ENCODE measurements at regions of chr20 and their contacts with region 1.

Region 1: DNA sequence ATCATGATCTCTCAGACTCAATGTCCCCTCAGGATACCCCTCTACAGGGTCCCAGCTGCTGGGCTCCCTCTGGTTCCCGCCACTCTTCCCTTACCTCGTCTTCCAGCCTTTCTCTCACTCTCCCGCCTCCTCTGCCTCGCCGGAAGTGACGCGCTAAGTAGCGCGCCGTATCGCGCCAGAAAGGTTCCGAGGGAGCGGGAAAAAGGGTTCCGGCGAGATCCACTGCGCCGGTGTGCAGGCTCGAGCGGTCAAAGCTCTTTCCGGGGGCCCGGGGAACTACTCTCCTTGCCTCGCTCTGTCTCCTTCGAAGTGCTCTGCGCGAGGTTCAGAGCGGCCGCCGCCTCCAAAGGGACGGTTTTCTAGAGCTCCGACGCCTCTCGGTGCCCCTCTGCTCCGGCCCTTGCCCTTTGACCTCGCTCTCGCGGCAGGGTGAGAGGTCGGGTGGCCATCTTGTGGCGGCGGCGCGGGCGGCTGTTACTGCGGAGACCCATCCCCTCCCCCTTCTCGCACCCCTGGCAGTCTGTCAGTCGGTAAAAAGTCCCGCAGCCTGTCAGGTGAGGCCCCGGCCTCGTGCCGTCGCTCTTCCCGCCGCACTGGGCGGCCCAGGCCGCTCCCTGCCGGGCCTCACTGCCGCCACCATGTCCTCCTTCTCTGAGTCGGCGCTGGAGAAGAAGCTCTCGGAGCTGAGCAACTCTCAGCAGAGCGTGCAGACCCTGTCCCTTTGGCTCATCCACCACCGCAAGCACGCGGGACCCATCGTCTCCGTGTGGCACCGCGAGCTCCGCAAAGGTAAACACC is at the starts of genes RPRD1B and TTI1:
- DNase-seq: peak; percentile 83 to 97 (median 86)
- ATAC-seq: peak; percentile 82
- H3K4me3 ChIP-seq: peak within 1 kb of the TSS; percentile 96
- H3K27ac ChIP-seq: peak within 1 kb of the TSS; percentile 98
- H3K4me1 ChIP-seq: peaks cover 22 to 40% of the 10 kb centered on the region in 2 experiments; a peak in 4 of 5 replicates
- H3K27me3 ChIP-seq: no peaks in the 10 kb centered on the region
- CTCF ChIP-seq: 0 out of 6 replicates have a peak, but pooled peaks of 1 of the 3 experiments have one; percentile 5
- EP300 ChIP-seq: no peak
- POLR2A ChIP-seq: peak; percentile 89
- RAD21 ChIP-seq: no peak
- polyA plus RNA-seq, gene RPRD1B: 5.5 to 8.2 TPM
- polyA plus RNA-seq, gene TTI1: 9.8 to 23.5 TPM

Region 2: GRCh38 chr20:38043512-38044300 is 10.2 kb after region 1 on chr20:
- CTCF ChIA-PET with region 1: no interaction called
- POLR2A ChIA-PET with region 1: interaction called, 19 read pairs
- in situ Hi-C with region 1: no loop called
- intact Hi-C with region 1: no loop called
- DNase-seq: no peak
- ATAC-seq: no peak
- H3K4me3 ChIP-seq: no peak overlapping the region
- H3K27ac ChIP-seq: no peak overlapping the region
- H3K4me1 ChIP-seq: no peaks in the 10 kb centered on the region
- H3K27me3 ChIP-seq: no peaks in the 10 kb centered on the region
- CTCF ChIP-seq: no peak
- EP300 ChIP-seq: no peak
- POLR2A ChIP-seq: no peak
- RAD21 ChIP-seq: no peak

Region 3: DNA sequence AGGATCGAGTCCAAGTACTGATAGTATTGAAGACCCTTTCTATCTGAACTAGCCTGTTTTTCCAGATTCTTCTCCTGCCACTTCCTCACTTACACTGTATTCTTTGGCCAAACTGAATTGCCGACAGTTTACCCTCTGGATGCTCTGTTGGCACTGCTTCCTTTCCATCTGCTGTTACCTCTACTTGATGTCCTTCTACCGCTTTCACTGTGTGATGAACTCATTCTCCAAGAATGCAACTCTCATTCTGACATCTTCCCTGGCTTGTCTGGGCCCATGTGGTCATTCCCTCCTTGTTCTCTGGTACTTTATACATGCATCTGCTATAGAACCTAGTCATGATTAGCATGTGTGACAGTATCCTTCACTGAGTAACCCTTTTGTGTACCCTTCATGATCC is 16.3 kb after region 1 on chr20:
- CTCF ChIA-PET with region 1: no interaction called
- POLR2A ChIA-PET with region 1: interaction called, 19 read pairs
- in situ Hi-C with region 1: no loop called
- intact Hi-C with region 1: no loop called
- DNase-seq: no peak
- ATAC-seq: no peak
- H3K4me3 ChIP-seq: no peak overlapping the region
- H3K27ac ChIP-seq: peak overlapping the region; percentile 9; the same call in 1 of the 3 replicates
- H3K4me1 ChIP-seq: no peaks in the 10 kb centered on the region; a peak in 1 of 5 replicates
- H3K27me3 ChIP-seq: no peaks in the 10 kb centered on the region
- CTCF ChIP-seq: no peak
- EP300 ChIP-seq: no peak
- POLR2A ChIP-seq: no peak
- RAD21 ChIP-seq: no peak